ENCODE measurements at regions of chr16 and their contacts with region 1.

Region 1: GRCh38 chr16:68264128-68265077 is at the start of gene SLC7A6:
- H3K4me3 ChIP-seq: peak within 1 kb of the TSS; percentile 78
- H3K27ac ChIP-seq: peak within 1 kb of the TSS; percentile 87
- H3K4me1 ChIP-seq: peaks cover 17% of the 10 kb centered on the region
- CTCF ChIP-seq: peak; percentile 98

Region 2: GRCh38 chr16:68085259-68086071 is 178.9 kb before region 1 on chr16 and contains the start of gene NFATC3:
- CTCF ChIA-PET with region 1: interaction called, 10 read pairs
- POLR2A ChIA-PET with region 1: interaction called, 7 read pairs
- H3K4me3 ChIP-seq: peak within 1 kb of the TSS; percentile 77
- H3K27ac ChIP-seq: peak within 1 kb of the TSS; percentile 88
- H3K4me1 ChIP-seq: peaks cover 14% of the 10 kb centered on the region
- CTCF ChIP-seq: peak; percentile 53; the same call in 1 of the 2 replicates

Region 3: DNA sequence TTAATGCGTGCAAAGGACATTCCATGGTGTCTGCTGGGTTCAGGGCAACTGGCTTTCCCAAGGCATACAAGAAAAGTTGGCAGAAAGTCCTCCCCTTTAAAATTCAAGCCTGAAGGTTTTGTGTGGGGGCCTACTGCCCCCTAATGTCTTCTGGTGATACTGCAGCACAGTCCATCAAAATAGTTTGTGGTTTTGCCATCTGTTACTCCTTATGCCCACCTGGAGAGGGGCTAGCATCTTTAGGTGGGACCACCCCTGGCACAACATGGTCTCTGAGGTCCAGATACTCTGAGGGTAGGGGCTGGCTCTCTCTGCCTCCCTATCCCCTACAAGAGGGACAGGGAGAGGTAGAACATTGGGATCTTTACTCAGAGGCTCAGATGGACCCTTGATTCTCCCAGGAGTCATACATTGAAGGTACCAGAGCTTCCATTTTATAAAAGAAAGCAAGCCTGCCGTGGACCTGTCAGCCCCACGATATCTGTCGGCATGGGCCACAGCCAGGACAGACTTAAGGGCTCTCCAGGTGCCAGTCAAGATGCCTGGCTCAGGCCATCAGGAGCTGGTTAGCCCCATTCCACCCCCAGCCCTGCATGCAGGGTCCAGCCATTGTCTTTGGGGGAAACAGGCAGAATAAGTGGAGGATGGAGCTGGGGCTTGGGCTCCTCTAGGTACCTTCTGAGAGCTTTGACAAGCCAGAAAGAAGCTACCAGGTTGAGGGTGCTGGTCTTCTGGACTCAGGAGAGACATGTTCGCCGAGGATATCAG is 34.8 kb before region 1 on chr16:
- CTCF ChIA-PET with region 1: no interaction called
- POLR2A ChIA-PET with region 1: no interaction called
- H3K4me3 ChIP-seq: no peak overlapping the region
- H3K27ac ChIP-seq: no peak overlapping the region
- H3K4me1 ChIP-seq: no peaks in the 10 kb centered on the region
- CTCF ChIP-seq: peak; percentile 86

Region 4: GRCh38 chr16:68244903-68245853 is 19.2 kb before region 1 on chr16 and contains the start of gene PLA2G15:
- CTCF ChIA-PET with region 1: interaction called, 14 read pairs
- POLR2A ChIA-PET with region 1: interaction called, 7 read pairs
- H3K4me3 ChIP-seq: peak within 1 kb of the TSS; percentile 84
- H3K27ac ChIP-seq: peak within 1 kb of the TSS; percentile 29; the same call in 1 of the 2 replicates
- H3K4me1 ChIP-seq: 0 out of 2 replicates have a peak, but pooled peaks cover 2% of the 10 kb centered on the region
- CTCF ChIP-seq: peak; percentile 29; the same call in 1 of the 2 replicates

Region 5: DNA sequence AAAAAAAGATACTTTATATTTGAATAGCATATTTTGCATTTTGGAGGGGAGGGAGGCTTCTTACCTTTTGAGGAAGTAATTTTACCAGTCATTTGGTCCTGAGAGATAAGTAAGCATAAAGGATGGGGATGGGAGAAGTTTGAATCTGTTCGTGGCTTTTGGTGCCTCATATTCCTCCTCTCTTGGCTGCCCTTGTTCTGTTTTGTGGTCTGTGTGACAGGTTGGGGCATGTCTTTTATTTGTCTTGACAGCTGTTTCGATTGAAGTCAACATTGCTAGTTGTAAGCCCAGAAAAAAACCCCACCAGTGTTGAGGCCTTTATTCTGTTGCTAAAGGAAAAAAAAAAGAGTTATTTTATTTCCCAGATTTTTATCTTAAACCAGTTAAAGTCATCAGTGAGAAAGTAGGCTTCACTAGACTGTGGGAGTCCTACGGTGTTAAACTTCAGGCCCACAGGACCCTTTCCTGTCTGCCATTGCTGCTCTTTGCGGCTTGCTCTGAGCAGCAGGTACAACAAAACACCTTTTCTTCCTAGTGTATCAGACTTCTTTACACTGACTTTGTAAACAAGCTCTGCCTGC is 11.3 kb after region 1 on chr16:
- CTCF ChIA-PET with region 1: interaction called, 11 read pairs
- POLR2A ChIA-PET with region 1: interaction called, 10 read pairs
- H3K4me3 ChIP-seq: no peak overlapping the region
- H3K27ac ChIP-seq: peak overlapping the region; percentile 54
- H3K4me1 ChIP-seq: no peaks in the 10 kb centered on the region; the same call in 1 of the 2 replicates
- CTCF ChIP-seq: no peak

Region 6: GRCh38 chr16:68310761-68311511 is 46.5 kb after region 1 on chr16 and contains the starts of genes PRMT7 and SLC7A6OS:
- CTCF ChIA-PET with region 1: interaction called, 19 read pairs
- POLR2A ChIA-PET with region 1: interaction called, 40 read pairs
- H3K4me3 ChIP-seq: peak within 1 kb of the TSS; percentile 85
- H3K27ac ChIP-seq: peak within 1 kb of the TSS; percentile 72
- H3K4me1 ChIP-seq: no peaks in the 10 kb centered on the region
- CTCF ChIP-seq: peak; percentile 68